MCF 10A (cell line): ENCODE measurements at regions of chr10 and their contacts with region 1.

Region 1: DNA sequence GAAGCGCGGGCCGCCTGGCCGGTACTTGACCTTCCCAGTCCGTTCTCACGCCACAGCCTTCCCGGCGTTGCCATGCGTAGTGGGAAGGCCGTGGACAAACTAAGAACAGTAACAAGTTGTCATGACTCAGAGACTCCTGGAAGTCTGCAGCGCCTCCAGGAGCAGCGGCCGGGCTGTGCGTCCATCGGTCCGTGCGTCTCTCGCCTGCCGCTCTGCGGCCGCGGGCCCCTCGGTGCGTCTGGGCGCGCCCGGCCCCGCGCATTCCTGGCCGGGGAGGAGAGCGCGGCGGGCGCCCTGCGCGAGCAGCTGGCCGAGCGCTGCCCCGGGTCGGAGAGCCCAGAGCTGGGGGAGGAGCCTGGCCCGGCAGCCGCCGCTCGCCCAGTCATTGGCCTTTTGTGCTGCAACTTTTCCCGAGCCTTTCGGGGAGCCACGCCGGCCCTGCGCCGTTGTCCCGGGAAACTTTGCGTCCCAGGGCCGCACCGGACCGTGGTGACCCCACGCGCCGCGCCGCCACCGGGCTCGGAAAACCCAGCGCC is 123.7 kb downstream of the TACC2 start:
- DNase-seq: peak; percentile 95
- H3K4me3 Mint-ChIP-seq: peak overlapping the region; percentile 85
- H3K27ac Mint-ChIP-seq: peak overlapping the region; percentile 90
- H3K4me1 Mint-ChIP-seq: peaks cover 32% of the 10 kb centered on the region
- H3K27me3 Mint-ChIP-seq: no peaks in the 10 kb centered on the region
- CTCF ChIP-seq: peak; percentile 30

Region 2: DNA sequence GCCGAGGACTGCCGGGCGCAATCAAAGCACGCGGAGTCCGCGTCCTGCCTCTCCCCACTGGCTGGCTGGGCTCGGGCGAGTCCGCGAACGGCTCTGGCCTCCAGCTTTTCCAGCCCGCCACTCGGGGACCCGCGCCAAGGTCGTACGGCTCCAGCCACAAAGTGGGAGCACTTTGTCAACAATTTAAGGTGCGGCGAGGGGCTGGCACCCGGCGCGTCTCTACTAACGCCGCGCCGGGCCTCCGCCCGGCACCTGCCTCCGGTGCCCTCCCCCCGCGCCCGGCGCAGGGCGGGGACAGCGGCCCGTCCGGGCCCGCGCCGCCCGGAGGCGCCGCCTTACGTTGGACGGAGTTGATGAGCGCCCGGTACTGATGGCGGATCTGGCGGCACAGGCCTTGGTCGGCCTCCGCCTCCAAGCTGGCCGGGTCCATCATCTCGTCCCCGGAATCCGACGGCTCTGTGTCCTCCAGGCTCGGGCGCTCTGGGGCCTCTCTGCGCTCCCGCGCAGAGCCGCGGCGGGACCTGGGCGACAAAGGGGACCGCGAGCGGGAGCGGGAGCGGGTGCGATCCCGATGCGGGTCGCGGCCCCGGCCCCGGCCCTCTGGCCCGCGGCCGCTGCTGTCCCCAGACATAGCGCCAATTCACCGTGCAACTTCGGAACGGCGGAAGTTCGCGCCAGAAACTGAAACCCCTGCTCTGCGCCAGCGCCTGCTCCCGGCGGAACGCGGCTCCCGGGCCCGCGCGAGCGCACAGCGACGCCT is 138.0 kb before region 1 on chr10 and contains the start of gene NSMCE4A:
- CTCF ChIA-PET with region 1: interaction called, 10 read pairs
- POLR2A ChIA-PET with region 1: interaction called, 21 read pairs
- intact Hi-C with region 1: loop called (anchors 1 kb)
- DNase-seq: peak; percentile 63
- H3K4me3 Mint-ChIP-seq: peak within 1 kb of the TSS; percentile 77
- H3K27ac Mint-ChIP-seq: peak within 1 kb of the TSS; percentile 16
- H3K4me1 Mint-ChIP-seq: peaks cover 13% of the 10 kb centered on the region
- H3K27me3 Mint-ChIP-seq: no peaks in the 10 kb centered on the region
- CTCF ChIP-seq: peak; percentile 59
- total RNA-seq, gene NSMCE4A: 24.5 and 30.2 TPM in 2 replicates

Region 3: GRCh38 chr10:122019414-122019975 is 93.2 kb before region 1 on chr10:
- CTCF ChIA-PET with region 1: interaction called, 5 read pairs
- POLR2A ChIA-PET with region 1: interaction called, 15 read pairs
- intact Hi-C with region 1: no loop called
- DNase-seq: peak; percentile 81
- H3K4me3 Mint-ChIP-seq: peak overlapping the region; percentile 68
- H3K27ac Mint-ChIP-seq: peak overlapping the region; percentile 86
- H3K4me1 Mint-ChIP-seq: peaks cover 21% of the 10 kb centered on the region
- H3K27me3 Mint-ChIP-seq: no peaks in the 10 kb centered on the region
- CTCF ChIP-seq: no peak

Region 4: GRCh38 chr10:122062831-122063674 is 49.6 kb before region 1 on chr10:
- CTCF ChIA-PET with region 1: interaction called, 16 read pairs
- POLR2A ChIA-PET with region 1: interaction called, 61 read pairs
- intact Hi-C with region 1: loop called (anchors 2 kb)
- DNase-seq: peak; percentile 97
- H3K4me3 Mint-ChIP-seq: peak overlapping the region; percentile 20
- H3K27ac Mint-ChIP-seq: peak overlapping the region; percentile 98
- H3K4me1 Mint-ChIP-seq: peaks cover 12% of the 10 kb centered on the region
- H3K27me3 Mint-ChIP-seq: no peaks in the 10 kb centered on the region
- CTCF ChIP-seq: no peak

Region 5: DNA sequence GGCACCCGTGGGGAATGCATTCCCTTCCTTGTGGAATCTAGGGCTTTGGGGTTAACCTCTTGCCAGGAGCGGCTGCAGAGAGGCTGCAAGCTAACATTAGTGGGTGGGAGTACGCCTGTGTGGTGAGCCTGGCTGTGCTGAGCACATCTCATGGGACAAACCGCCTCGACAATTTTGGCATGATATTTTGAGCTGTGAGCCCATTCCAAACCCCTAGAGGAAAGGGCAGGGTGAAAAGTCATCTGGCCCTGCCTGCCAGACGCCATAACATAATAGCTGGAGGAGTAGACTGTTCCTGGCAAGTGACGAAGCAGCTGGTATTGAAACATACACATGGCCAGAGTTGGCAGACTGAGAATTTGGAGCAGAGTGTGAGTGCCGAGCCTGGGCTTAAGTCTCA is 13.8 kb before region 1 on chr10:
- CTCF ChIA-PET with region 1: interaction called, 37 read pairs
- POLR2A ChIA-PET with region 1: interaction called, 46 read pairs
- intact Hi-C with region 1: no loop called
- DNase-seq: no peak
- H3K4me3 Mint-ChIP-seq: no peak overlapping the region
- H3K27ac Mint-ChIP-seq: no peak overlapping the region
- H3K4me1 Mint-ChIP-seq: peaks cover 16% of the 10 kb centered on the region
- H3K27me3 Mint-ChIP-seq: no peaks in the 10 kb centered on the region
- CTCF ChIP-seq: no peak

Region 6: GRCh38 chr10:122142641-122143237 is 30.0 kb after region 1 on chr10:
- CTCF ChIA-PET with region 1: interaction called, 3 read pairs
- POLR2A ChIA-PET with region 1: interaction called, 47 read pairs
- intact Hi-C with region 1: loop called (anchors 1 kb)
- DNase-seq: no peak
- H3K4me3 Mint-ChIP-seq: no peak overlapping the region
- H3K27ac Mint-ChIP-seq: peak overlapping the region; percentile 59
- H3K4me1 Mint-ChIP-seq: peaks cover 39% of the 10 kb centered on the region
- H3K27me3 Mint-ChIP-seq: no peaks in the 10 kb centered on the region
- CTCF ChIP-seq: peak; percentile 99

Region 7: DNA sequence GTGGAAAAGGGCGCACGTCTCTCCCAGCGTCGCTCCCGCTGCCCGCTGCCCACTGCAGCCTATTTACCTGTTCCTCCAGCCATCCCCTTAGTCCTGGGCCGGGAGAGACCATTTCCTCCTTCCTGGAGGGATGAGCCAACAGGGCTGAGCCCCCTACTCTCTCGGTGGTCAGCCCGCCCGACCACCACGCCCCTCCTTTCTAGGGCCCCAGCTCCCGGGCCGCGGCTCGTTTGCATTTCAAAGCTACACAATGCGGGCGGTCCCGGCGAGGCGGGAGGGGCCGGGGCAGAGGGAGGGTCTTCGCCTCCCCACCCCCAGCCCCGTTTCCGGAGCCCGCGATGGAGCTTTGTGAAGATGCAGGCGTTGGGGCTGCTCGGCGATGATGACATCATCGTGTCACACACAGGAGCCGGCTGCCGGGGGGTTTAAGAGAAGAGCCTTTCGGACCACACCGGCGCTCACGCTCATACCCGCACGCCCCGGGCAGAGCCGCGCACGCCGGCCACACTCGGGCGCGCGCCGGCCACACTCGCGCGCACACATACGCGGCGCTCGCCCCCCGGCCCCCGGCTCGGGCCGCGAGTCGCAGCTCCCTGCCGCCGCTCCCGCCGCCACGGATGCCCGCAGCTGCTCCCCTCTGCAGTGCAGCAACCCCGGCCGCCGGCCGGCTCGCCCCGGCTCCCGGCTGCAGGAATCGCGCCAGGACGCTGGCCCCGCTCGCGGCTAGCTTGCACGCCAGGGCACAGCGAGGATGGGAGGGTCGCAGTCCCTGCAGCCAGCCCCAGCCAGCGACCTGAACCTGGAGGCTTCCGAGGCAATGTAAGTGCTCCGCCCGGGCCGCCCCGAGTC is 50.7 kb after region 1 on chr10:
- CTCF ChIA-PET with region 1: no interaction called
- POLR2A ChIA-PET with region 1: no interaction called
- intact Hi-C with region 1: no loop called
- DNase-seq: no peak
- H3K4me3 Mint-ChIP-seq: no peak overlapping the region
- H3K27ac Mint-ChIP-seq: no peak overlapping the region
- H3K4me1 Mint-ChIP-seq: peaks cover 11% of the 10 kb centered on the region
- H3K27me3 Mint-ChIP-seq: no peaks in the 10 kb centered on the region
- CTCF ChIP-seq: no peak

Region 8: DNA sequence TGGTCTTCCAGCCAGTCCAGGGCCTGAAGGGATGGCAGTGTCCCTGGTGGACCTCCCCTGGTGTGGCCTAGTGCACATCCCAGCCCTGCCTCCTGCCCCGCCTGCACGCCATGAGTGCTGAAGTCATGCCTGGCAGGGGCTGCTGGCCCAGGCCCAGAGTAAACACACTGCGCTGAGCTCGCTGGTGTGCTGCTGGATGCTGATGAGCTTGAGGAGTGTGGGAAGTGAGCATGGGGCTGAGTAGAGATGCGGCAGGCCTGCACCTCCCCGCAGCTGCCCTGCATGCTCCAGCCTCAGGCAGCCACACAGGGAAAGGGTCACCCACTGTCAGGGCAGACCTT is 391.9 kb after region 1 on chr10:
- CTCF ChIA-PET with region 1: no interaction called
- POLR2A ChIA-PET with region 1: no interaction called
- intact Hi-C with region 1: no loop called
- DNase-seq: peak; percentile 94
- H3K4me3 Mint-ChIP-seq: peak overlapping the region; percentile 16
- H3K27ac Mint-ChIP-seq: no peak overlapping the region
- H3K4me1 Mint-ChIP-seq: peaks cover 25% of the 10 kb centered on the region
- H3K27me3 Mint-ChIP-seq: no peaks in the 10 kb centered on the region
- CTCF ChIP-seq: no peak